Heart right ventricle (tissue), 16 donors: ENCODE measurements at regions of chr1 and their contacts with region 1.

Region 1: DNA sequence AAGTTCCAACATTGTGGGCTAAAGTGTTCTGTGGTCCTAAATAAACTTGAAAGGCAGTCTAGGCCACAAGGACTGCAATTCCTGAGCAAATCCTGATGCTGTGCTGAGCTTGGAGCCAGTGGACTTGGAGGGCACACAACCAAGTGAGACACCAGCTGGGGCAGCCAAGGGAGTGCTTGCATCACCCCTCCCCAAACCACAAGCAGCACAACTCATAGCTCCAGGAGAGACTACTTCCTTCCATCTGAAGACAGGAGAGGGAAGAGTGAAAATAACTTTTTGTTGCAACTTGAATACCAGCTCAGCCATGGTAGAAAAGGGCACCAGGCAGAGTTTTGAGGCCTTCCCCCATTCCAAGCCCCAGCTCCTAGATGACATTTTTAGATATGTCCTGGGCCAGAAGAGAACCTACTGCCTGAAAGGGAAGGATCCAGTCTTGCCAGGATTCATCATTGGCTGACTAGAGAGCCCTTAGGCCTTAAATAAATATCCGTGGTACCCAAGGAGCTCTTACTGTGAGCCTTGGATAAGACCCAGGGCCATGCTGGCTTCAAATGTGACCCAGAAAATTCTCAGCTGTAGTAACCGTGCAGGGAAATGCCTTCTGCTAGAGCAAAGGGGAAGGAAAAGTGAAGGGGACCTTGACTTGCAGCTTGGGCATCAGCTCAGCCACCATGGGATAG is 35.4 kb upstream of the LRRC8B start:
- DNase-seq: no peak
- ATAC-seq: no peak
- H3K4me3 ChIP-seq: no peak overlapping the region
- H3K27ac ChIP-seq: no peak overlapping the region
- H3K4me1 ChIP-seq: peaks cover 0 to 10% (median 0%) of the 10 kb centered on the region in 9 donors
- H3K27me3 ChIP-seq: no peaks in the 10 kb centered on the region
- CTCF ChIP-seq: no peak

Region 2: GRCh38 chr1:89590415-89591080 is 101.4 kb after region 1 on chr1:
- intact Hi-C with region 1: loop called in 4 of 10 experiments (anchors 5 kb)
- DNase-seq: no peak
- ATAC-seq: peak in 1 of 8 donors; percentile 15
- H3K4me3 ChIP-seq: no peak overlapping the region
- H3K27ac ChIP-seq: peak overlapping the region in 1 of 10 donors; percentile 50
- H3K4me1 ChIP-seq: peaks cover 0 to 23% (median 15%) of the 10 kb centered on the region in 9 donors
- H3K27me3 ChIP-seq: no peaks in the 10 kb centered on the region
- CTCF ChIP-seq: no peak

Region 3: GRCh38 chr1:89598450-89599331 is 109.5 kb after region 1 on chr1:
- intact Hi-C with region 1: loop called in 5 of 10 experiments (anchors 5 kb)
- DNase-seq: no peak
- ATAC-seq: peak in 5 of 8 donors; percentile 51 to 77 (median 74)
- H3K4me3 ChIP-seq: no peak overlapping the region
- H3K27ac ChIP-seq: no peak overlapping the region
- H3K4me1 ChIP-seq: peaks cover 0 to 19% (median 13%) of the 10 kb centered on the region in 9 donors
- H3K27me3 ChIP-seq: no peaks in the 10 kb centered on the region
- CTCF ChIP-seq: peak; percentile 43 to 81 (median 71)